AG04449 (cell line): ENCODE measurements at regions of chr7 and their contacts with region 1.

Region 1: GRCh38 chr7:25216837-25217236 is 11.4 kb downstream of the NPVF start:
- DNase-seq: no peak
- H3K4me3 ChIP-seq: no peak overlapping the region
- CTCF ChIP-seq: peak; percentile 37

Region 2: DNA sequence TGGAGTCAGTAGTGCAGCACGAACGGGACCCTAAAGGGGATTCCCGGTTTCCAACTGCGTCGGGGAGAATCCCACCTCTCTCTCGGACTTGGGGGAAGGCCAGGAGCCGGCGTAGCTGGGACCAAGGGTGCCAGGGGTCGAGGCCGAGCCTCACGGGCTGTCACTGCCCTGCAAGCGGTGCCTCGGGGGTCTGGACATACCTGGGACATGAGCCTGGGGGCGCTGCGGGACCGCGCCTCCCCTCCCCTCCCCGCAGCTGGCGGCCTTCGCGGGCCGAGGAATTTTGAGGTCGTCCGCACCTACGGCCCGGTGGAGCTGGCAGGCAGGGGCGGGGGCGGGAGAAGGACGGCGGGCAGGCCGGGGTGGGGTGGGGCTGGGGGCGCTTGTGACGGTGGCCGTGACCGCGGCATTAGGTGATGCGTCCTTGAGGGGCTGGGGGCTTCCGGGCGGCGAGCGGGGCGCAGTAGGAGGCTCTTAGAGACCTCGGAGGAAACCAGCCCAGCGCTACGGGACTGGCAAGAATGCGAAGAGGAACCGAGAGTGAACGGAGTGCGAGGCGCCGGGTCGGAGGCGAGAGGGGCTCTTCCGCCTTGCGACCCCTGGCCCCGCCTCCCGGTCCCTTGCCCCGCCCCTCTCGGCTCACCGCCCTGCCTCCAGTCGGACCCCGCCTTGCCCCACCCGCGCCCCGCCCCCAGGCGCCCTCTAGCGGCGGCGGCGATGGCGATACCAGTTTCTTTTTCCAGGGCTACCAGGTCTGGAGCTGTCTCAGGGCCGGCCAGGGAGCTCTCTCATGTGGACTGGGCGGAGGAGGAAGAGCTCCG is 36.9 kb before region 1 on chr7:
- CTCF ChIA-PET with region 1: interaction called, 13 read pairs
- POLR2A ChIA-PET with region 1: no interaction called
- DNase-seq: no peak
- H3K4me3 ChIP-seq: peak overlapping the region; percentile 85
- CTCF ChIP-seq: peak; percentile 80

Region 3: DNA sequence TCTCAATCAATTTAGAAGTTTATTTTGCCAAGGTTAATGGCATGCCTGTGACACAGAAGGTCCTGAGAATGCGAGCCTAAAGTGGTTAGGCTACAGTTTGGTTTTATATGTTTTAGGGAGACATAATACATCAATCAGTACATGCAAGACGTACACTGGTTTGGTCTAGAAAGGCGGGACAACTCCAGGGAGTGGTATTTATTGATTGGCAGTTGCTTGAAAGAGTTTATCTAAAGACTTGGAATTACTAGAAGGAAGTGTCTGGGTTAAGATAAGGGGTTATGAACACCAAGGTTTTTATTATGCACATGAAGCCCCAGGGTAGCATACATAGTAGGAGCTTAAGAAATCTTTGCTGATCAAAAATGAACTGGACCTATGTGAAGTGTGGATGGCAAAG is 10.1 kb before region 1 on chr7:
- CTCF ChIA-PET with region 1: interaction called, 16 read pairs
- POLR2A ChIA-PET with region 1: no interaction called
- DNase-seq: no peak
- H3K4me3 ChIP-seq: no peak overlapping the region
- CTCF ChIP-seq: no peak

Region 4: DNA sequence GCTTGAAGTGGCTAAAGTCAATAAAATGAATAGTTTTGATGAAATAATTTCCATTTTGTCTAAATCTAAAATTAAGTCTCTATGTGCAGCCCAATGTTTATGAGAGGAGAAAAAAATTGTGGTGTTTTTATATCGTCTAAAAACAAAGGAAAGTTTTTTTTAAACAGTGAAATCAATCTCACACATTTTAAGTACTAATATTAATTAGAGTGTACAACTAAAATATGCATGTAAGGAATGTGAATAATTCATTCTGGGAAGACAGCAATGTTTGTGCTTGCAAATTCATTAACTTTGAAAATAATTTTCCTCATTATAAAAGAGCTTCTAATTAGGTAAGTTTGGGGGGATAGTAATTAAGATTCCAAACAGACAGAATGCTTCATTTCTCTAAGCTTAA is 11.5 kb after region 1 on chr7 and contains the start of gene NPVF:
- CTCF ChIA-PET with region 1: interaction called, 18 read pairs
- POLR2A ChIA-PET with region 1: no interaction called
- DNase-seq: no peak
- H3K4me3 ChIP-seq: no peak within 1 kb of the TSS
- CTCF ChIP-seq: no peak